Dendritic cell treated with granulocyte-macrophage colony-stimulating factor and Interleukin-4, amounts not matched to agents 40 ng/mL and 50 ng/mL, for 4 days (primary cell): ENCODE measurements at regions of chr15 and their contacts with region 1.

Region 1: GRCh38 chr15:91748877-91749276 is 104.6 kb upstream of the SLCO3A1 start:
- H3K4me3 Mint-ChIP-seq: no peak overlapping the region
- H3K27ac Mint-ChIP-seq: no peak overlapping the region
- H3K4me1 Mint-ChIP-seq: no peaks in the 10 kb centered on the region
- H3K27me3 Mint-ChIP-seq: peaks cover 2% of the 10 kb centered on the region

Region 2: GRCh38 chr15:91652610-91653207 is 96.2 kb before region 1 on chr15:
- intact Hi-C with region 1: loop called (anchors 10 kb)
- H3K4me3 Mint-ChIP-seq: no peak overlapping the region
- H3K27ac Mint-ChIP-seq: no peak overlapping the region
- H3K4me1 Mint-ChIP-seq: no peaks in the 10 kb centered on the region
- H3K27me3 Mint-ChIP-seq: peaks cover 17% of the 10 kb centered on the region